SK-N-SH (cell line): ENCODE measurements at regions of chr18 and their contacts with region 1.

Region 1: DNA sequence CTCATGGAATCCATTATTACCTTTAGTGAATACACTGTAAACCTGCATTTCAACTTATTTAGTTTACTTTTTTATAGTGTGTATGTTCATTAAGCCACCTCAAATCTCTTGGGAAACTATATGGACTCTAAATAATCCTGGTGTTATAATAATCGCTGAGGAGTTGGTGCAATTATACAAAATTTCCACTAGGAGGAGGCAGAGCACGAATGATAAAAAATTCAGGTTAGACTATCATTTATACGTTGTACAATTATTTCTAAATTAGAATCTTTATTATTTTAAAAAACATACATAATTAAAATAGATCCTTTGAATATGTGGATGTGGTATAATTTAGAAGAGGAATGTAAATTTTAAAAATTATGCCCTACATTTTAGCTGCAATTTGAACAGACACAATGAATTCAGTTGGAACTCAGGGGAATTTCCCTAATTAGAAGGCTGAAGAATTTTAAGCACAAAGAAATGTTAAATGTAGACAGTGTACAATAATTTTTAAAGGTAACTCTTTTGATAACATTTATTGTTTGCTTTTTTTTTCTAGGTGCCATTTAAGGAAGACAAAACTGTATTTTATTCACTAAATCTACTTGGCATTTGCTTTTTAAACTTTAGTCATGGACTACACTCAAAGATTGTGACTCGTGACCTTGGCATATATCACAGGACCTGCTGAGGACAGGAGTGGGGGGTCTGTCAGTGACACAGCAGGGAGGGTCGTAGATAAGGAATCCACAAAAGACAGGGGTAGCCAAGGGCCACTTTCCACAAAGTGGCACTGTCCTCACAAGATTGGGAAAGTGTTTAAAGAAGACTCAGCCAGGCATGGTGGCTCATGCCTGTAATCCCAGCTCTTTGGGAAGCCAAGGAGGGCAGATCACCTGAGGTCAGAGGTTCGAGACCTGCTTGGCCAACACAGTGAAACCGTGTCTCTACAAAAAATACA is 45.5 kb downstream of the RAB12 start:
- DNase-seq: peak; percentile 51
- H3K4me3 ChIP-seq: no peak overlapping the region; a peak in 1 of 4 replicates
- H3K27ac ChIP-seq: no peak overlapping the region
- H3K4me1 ChIP-seq: peaks cover 0 to 14% of the 10 kb centered on the region in 2 experiments; a peak in 1 of 4 replicates
- H3K27me3 ChIP-seq: no peaks in the 10 kb centered on the region
- CTCF ChIP-seq: peak; percentile 78
- EP300 ChIP-seq: no peak
- RAD21 ChIP-seq: peak; percentile 86

Region 2: GRCh38 chr18:8643326-8643878 is 11.4 kb before region 1 on chr18:
- CTCF ChIA-PET with region 1: interaction called, 47 read pairs
- POLR2A ChIA-PET with region 1: no interaction called
- DNase-seq: no peak
- H3K4me3 ChIP-seq: no peak overlapping the region; a peak in 1 of 4 replicates
- H3K27ac ChIP-seq: peak overlapping the region in 1 of 2 experiments; percentile 26; a peak in 1 of 4 replicates
- H3K4me1 ChIP-seq: 0 out of 4 replicates have a peak, but pooled peaks cover 0 to 8% of the 10 kb centered on the region in 2 experiments
- H3K27me3 ChIP-seq: no peaks in the 10 kb centered on the region
- CTCF ChIP-seq: no peak
- EP300 ChIP-seq: no peak
- RAD21 ChIP-seq: no peak

Region 3: GRCh38 chr18:8998481-8999217 is 343.9 kb after region 1 on chr18:
- CTCF ChIA-PET with region 1: interaction called, 15 read pairs
- POLR2A ChIA-PET with region 1: no interaction called
- DNase-seq: no peak
- H3K4me3 ChIP-seq: no peak overlapping the region
- H3K27ac ChIP-seq: no peak overlapping the region
- H3K4me1 ChIP-seq: no peaks in the 10 kb centered on the region
- H3K27me3 ChIP-seq: no peaks in the 10 kb centered on the region
- CTCF ChIP-seq: no peak
- EP300 ChIP-seq: no peak
- RAD21 ChIP-seq: no peak